ENCODE measurements at regions of chr21 and their contacts with region 1.

Region 1: DNA sequence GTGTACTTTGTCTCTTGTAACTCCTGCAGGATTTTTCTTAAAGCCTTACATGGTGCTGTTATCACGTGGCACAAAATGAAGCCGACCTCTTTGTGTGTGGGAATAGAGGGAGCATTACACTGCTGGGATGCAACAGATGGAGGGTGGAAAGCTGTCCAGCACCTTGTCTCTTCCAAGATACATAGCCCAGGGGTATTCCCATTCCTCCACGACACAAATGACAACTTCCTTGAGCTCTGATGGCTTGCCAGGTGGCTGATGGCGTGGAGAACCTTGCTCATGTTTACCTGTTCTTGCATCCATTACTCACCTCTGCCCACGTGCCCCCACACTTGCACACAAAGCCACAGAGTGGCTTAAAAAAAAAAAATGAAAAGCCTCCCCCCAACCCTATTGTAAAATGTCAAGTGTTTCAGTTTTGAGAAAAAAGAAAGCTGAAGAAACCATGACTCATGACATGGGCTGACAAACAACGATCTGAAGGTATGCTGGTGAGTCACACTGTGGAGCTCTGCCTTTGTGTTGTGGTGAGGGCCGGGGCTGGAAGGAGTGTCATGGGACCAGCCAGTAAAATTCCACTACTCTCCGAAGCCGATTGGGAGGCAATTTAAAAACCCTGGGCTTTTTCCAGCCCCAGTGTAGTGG is 32.0 kb upstream of the ATP5PO start:
- DNase-seq: peak; percentile 82
- ATAC-seq: peak; percentile 90 to 98

Region 2: GRCh38 chr21:33836408-33836807 is 111.2 kb before region 1 on chr21:
- intact Hi-C with region 1: no loop called
- DNase-seq: no peak
- ATAC-seq: no peak

Region 3: GRCh38 chr21:34073032-34073869 is 125.7 kb after region 1 on chr21 and contains the starts of genes MRPS6 and SLC5A3:
- intact Hi-C with region 1: loop called in 1 of 2 experiments (anchors 10 kb)
- DNase-seq: peak; percentile 89
- ATAC-seq: peak; percentile 85 to 88
- total RNA-seq, gene MRPS6: 54.8 to 67.2 TPM
- total RNA-seq, gene SLC5A3: 6.6 to 13.4 TPM

Measured in left cardiac atrium (tissue), 4 donors.